A549 (cell line): ENCODE measurements at regions of chr14 and their contacts with region 1.

Region 1: DNA sequence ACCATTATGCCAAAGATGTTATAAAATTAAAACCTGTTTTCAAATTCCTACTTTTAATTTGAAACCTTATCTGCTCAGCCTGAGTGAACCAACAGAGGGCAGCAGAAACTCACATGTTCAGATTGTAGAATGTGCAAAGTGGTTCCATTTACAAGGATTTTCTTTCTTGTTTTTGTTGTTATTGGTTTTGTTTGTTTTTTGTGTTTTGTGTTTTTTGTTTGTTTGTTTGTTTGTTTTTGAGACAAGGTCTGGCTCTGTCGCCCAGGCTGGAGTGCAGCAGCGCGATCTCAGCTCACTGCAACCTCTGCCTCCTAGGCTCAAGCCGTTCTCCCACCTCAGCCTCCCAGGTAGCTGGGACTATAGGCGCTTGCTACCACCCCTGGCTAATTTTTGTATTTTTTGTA is 22.8 kb upstream of the GARIN2 start:
- DNase-seq: peak in 1 of 2 experiments; percentile 64
- ATAC-seq: peak; percentile 76 to 78; a peak in 5 of 6 replicates
- H3K4me3 ChIP-seq: no peak overlapping the region
- H3K27ac ChIP-seq: peak overlapping the region in 1 of 2 experiments; percentile 25; a peak in 2 of 6 replicates
- H3K4me1 ChIP-seq: peaks cover 13% of the 10 kb centered on the region
- CTCF ChIP-seq: peak; percentile 96
- EP300 ChIP-seq: no peak
- POLR2A ChIP-seq: no peak
- RAD21 ChIP-seq: peak; percentile 97 to 98

Region 2: DNA sequence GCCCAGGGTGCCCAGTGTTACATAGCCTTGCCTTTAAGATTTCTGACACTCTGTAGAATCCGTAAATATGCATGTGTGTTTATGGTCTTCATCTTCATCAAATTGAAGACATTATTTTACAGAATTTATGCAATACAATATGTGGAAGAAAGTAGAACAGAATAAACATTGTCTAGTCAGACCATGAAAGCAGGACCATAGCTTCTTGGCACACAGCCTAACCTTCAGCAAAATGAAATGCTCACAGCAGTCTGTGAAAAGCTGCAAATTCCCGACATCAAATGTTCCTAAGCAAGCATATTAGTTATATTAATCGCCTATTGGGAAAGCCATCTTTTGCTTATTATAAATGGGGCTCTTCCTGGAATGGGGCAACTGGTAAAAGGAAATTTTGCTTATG is 88.5 kb before region 1 on chr14:
- CTCF ChIA-PET with region 1: no interaction called
- POLR2A ChIA-PET with region 1: no interaction called
- DNase-seq: no peak
- ATAC-seq: no peak
- H3K4me3 ChIP-seq: no peak overlapping the region
- H3K27ac ChIP-seq: no peak overlapping the region
- H3K4me1 ChIP-seq: no peaks in the 10 kb centered on the region
- CTCF ChIP-seq: no peak
- EP300 ChIP-seq: no peak
- POLR2A ChIP-seq: no peak
- RAD21 ChIP-seq: no peak

Region 3: GRCh38 chr14:67191768-67192290 is 25.4 kb after region 1 on chr14:
- CTCF ChIA-PET with region 1: interaction called, 10 read pairs
- POLR2A ChIA-PET with region 1: no interaction called
- DNase-seq: no peak
- ATAC-seq: no peak
- H3K4me3 ChIP-seq: no peak overlapping the region
- H3K27ac ChIP-seq: no peak overlapping the region
- H3K4me1 ChIP-seq: peaks cover 15% of the 10 kb centered on the region
- CTCF ChIP-seq: no peak
- EP300 ChIP-seq: no peak
- POLR2A ChIP-seq: no peak
- RAD21 ChIP-seq: no peak

Region 4: GRCh38 chr14:67285876-67286452 is 119.5 kb after region 1 on chr14:
- CTCF ChIA-PET with region 1: interaction called, 82 read pairs
- POLR2A ChIA-PET with region 1: no interaction called
- DNase-seq: peak; percentile 30 to 59
- ATAC-seq: peak in 1 of 2 experiments; percentile 50; a peak in 2 of 6 replicates
- H3K4me3 ChIP-seq: no peak overlapping the region
- H3K27ac ChIP-seq: no peak overlapping the region
- H3K4me1 ChIP-seq: peaks cover 6% of the 10 kb centered on the region; the same call in 1 of the 3 replicates
- CTCF ChIP-seq: peak; percentile 81
- EP300 ChIP-seq: no peak
- POLR2A ChIP-seq: no peak
- RAD21 ChIP-seq: peak; percentile 72 to 79

Region 5: DNA sequence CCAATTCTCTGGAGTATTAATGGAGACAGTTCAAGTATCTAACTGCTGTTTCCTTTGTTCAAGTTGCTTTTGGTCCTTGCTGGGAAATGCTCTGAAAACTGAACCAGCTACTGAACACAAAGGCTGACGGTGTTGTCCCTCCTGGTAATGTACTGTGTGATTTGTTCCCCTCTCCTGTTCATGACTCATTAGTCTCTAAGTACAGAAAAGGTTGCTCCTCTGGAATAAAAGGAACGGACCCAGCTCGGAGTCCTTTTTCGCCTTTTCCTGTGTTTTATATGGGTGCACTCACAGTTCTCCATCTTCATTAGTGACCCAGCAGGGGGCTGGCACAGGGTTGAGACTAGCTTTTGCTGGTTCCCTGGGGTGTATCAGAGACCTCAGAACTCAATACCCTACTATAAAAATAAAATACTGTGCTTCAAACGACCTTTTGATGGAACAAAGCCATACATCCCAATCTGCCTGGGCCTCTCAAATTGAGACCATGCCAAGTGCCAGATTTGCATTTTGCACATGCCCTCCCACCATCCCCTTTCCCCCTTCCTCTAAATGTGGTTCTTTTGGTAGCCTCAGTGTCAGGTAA is 922.8 kb after region 1 on chr14:
- CTCF ChIA-PET with region 1: no interaction called
- POLR2A ChIA-PET with region 1: no interaction called
- DNase-seq: peak; percentile 67 to 88
- ATAC-seq: peak; percentile 95 to 97
- H3K4me3 ChIP-seq: no peak overlapping the region
- H3K27ac ChIP-seq: peak overlapping the region; percentile 83
- H3K4me1 ChIP-seq: peaks cover 23% of the 10 kb centered on the region
- CTCF ChIP-seq: no peak
- EP300 ChIP-seq: no peak
- POLR2A ChIP-seq: no peak
- RAD21 ChIP-seq: no peak